ENCODE measurements at regions of chr11 and their contacts with region 1.

Region 1: DNA sequence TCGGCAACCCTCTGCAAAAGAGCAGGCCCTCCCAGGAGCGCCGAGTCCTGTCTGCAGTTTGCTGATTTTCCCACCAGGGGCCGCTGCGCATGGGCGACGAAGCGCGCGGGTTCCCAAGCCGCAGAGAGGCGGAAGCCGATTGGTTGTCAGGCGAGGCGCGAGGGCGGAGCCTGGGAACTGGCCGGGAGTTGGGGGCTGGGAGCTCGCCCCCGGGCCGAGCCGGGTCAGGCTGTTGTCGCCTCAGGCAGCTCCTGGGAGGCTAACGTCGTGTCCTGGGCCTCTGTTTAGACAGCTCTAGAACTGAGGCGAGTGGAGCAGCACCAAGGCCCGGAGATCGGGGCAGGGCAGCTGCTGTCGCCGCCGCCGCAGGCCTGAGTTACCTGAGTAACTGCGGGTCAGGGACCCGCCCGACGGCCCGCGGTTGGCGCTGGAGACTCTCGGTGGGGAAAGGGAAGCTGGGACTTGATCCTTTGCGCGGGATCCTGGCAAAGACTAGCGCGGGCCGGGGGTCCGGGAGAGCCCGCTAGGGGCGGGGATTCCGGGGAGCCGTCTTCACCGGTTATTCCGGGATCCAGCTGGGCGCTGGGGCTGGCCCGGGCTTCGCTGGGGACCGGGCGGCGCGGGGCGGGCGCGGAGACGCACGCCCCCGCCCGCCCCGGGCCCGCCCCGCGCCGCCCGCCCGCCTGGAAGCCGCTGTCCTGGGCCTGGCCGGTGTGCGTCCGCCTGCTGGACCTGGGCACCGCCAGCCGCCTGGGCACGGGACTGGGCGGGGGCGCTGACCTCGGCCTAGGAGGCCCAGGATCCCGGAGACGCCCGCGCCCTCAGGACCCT is at the start of gene STIM1:
- DNase-seq: peak; percentile 96 to 99 (median 97)
- ATAC-seq: peak; percentile 70 to 75
- H3K4me3 Mint-ChIP-seq: peak within 1 kb of the TSS; percentile 79 to 100 (median 94)
- H3K27ac Mint-ChIP-seq: peak within 1 kb of the TSS; percentile 94 to 100 (median 100)
- H3K4me1 Mint-ChIP-seq: peaks cover 39 to 72% (median 63%) of the 10 kb centered on the region in 4 donors
- H3K27me3 Mint-ChIP-seq: peaks cover 0 to 1% (median 0%) of the 10 kb centered on the region in 5 donors
- polyA plus RNA-seq, gene STIM1: 33.4 to 39.0 (median 38.9) TPM

Region 2: DNA sequence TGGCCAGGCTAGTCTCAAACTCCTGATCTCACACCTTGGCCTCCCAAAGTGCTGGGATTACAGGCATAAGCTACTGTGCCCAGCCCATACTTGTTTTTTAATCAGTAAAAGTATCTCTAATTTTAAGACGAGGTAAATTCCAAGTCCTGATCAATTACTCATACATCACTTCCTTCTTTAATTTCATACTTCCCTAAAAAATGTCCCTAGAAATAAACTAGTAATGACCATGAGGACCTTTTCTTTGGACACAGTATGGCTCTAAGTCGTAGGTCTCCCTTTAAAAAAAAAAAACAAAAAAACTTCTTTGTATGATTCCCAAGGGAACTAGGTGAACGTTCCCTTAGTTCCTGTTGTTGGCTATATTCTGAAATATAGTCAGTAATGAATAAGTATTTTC is 87.7 kb before region 1 on chr11:
- POLR2A ChIA-PET with region 1: no interaction called
- DNase-seq: no peak
- ATAC-seq: no peak
- H3K4me3 Mint-ChIP-seq: no peak overlapping the region
- H3K27ac Mint-ChIP-seq: peak overlapping the region in 1 of 10 donors; percentile 56
- H3K4me1 Mint-ChIP-seq: peaks cover 0 to 4% (median 0%) of the 10 kb centered on the region in 4 donors
- H3K27me3 Mint-ChIP-seq: no peaks in the 10 kb centered on the region

Region 3: GRCh38 chr11:3841426-3842350 is 13.5 kb before region 1 on chr11:
- POLR2A ChIA-PET with region 1: interaction called, 406 read pairs
- DNase-seq: peak; percentile 89 to 97 (median 94)
- ATAC-seq: peak; percentile 74 to 82
- H3K4me3 Mint-ChIP-seq: peak overlapping the region; percentile 84 to 96 (median 88)
- H3K27ac Mint-ChIP-seq: peak overlapping the region; percentile 90 to 100 (median 98)
- H3K4me1 Mint-ChIP-seq: peaks cover 28 to 51% (median 41%) of the 10 kb centered on the region in 4 donors
- H3K27me3 Mint-ChIP-seq: no peaks in the 10 kb centered on the region

Region 4: GRCh38 chr11:3873712-3874349 is 18.6 kb after region 1 on chr11:
- POLR2A ChIA-PET with region 1: interaction called, 26 read pairs
- DNase-seq: no peak
- ATAC-seq: no peak
- H3K4me3 Mint-ChIP-seq: peak overlapping the region in 3 of 10 donors; percentile 0 to 34 (median 5)
- H3K27ac Mint-ChIP-seq: peak overlapping the region in 9 of 10 donors; percentile 33 to 83 (median 63)
- H3K4me1 Mint-ChIP-seq: peaks cover 48 to 96% (median 89%) of the 10 kb centered on the region in 4 donors
- H3K27me3 Mint-ChIP-seq: no peaks in the 10 kb centered on the region

Region 5: DNA sequence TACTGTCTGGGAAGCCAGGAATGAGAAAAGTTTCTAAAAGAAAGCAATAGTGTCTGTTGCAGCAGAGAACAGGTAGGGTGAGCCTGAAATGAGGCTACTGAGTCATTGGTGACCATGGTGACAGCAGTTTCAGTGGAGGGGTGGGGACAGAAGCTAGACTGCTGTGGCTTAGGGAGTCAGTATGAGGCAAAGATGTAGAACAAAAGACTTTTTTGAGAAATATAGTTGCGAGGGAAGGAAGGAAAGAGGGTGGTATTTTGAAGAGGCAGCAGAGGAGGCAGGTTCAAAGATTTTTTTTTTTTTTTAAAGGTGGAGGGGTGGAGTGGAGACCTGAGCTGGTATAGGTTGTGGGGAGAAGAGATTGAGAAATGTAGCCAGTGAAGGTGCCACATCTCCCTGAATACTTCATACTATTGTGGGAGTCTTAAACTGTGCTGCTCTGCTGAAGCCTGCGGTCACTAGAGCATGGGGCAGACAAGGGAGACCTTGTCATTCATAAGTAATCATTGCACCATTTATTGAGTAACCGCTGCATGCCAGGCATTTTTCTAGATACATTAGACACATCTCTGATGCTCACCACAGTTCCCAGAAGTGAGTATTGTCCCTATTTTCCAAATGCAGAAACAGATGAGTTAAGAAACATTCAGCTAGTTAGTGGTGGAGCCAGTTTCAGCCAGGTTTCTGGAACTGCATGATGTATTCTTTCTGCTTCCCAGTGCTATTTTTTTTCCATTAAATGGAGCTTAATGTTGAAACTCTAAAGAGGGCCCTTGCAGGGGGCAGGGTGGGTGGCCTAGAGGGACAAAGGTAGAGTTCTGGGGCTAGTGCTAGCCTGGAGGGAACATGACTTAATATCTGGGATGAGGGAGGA is 50.1 kb after region 1 on chr11:
- POLR2A ChIA-PET with region 1: interaction called, 23 read pairs
- DNase-seq: peak; percentile 23 to 87 (median 65)
- ATAC-seq: peak; percentile 93 to 96
- H3K4me3 Mint-ChIP-seq: peak overlapping the region in 9 of 10 donors; percentile 9 to 73 (median 61)
- H3K27ac Mint-ChIP-seq: peak overlapping the region; percentile 86 to 97 (median 93)
- H3K4me1 Mint-ChIP-seq: peaks cover 59 to 94% (median 83%) of the 10 kb centered on the region in 4 donors
- H3K27me3 Mint-ChIP-seq: no peaks in the 10 kb centered on the region

Region 6: GRCh38 chr11:3984896-3985295 is 129.7 kb after region 1 on chr11:
- POLR2A ChIA-PET with region 1: interaction called, 16 read pairs
- DNase-seq: peak in 9 of 10 donors; percentile 25 to 70 (median 44)
- ATAC-seq: peak; percentile 67 to 71
- H3K4me3 Mint-ChIP-seq: peak overlapping the region in 6 of 10 donors; percentile 0 to 74 (median 10)
- H3K27ac Mint-ChIP-seq: peak overlapping the region; percentile 75 to 93 (median 90)
- H3K4me1 Mint-ChIP-seq: peaks cover 48 to 95% (median 93%) of the 10 kb centered on the region in 4 donors
- H3K27me3 Mint-ChIP-seq: no peaks in the 10 kb centered on the region